IMR-90 (cell line): ENCODE measurements at regions of chr3 and their contacts with region 1.

Region 1: GRCh38 chr3:171829841-171830517 is 13.2 kb upstream of the TMEM212 start:
- DNase-seq: peak; percentile 85
- ATAC-seq: peak; percentile 64
- H3K4me3 ChIP-seq: no peak overlapping the region
- H3K27ac ChIP-seq: no peak overlapping the region
- H3K4me1 ChIP-seq: peaks cover 16% of the 10 kb centered on the region
- H3K27me3 ChIP-seq: no peaks in the 10 kb centered on the region
- CTCF ChIP-seq: peak; percentile 75
- POLR2A ChIP-seq: 0 out of 2 replicates have a peak, but pooled peaks have one; percentile 25
- RAD21 ChIP-seq: peak; percentile 76

Region 2: DNA sequence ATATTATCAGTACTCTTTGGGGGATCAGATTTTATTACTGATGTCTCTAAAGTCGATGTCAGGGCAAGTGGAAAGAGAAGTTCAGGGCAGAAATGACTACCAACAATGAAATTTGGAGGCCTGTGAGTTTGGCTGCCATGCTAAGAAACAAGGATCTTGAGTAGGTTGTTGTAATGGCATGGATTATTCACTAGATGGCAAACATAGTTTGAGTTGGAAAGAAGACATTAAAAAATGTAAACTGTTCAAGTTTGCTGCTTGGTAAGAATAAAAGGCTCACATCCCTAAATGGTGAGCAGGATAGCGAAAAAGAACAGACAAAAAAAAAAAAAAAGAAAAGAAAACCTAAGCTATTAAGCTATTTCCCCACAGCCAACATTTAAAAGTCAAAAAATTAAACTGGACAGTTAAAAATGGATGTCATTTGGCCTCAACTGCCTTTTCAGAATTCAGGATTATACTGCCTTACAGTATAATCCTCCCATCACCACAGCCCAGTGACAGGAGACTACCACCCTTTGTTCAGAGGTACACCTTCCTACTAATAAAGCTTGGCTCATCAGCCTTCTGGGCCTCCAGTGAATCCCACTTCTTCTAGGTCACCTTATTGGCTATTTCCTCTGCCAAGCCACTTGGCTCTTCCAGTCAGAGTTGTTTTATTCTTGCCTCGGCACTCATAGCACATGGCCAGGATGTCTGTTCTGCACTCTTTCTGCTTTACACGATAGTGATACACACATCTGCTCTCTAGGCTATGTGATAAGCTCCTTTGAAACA is 183.4 kb before region 1 on chr3:
- CTCF ChIA-PET with region 1: interaction called, 4 read pairs
- POLR2A ChIA-PET with region 1: no interaction called
- dilution Hi-C with region 1: no loop called
- in situ Hi-C with region 1: no loop called
- intact Hi-C with region 1: loop called (anchors 1 kb)
- DNase-seq: peak; percentile 80
- ATAC-seq: peak; percentile 90
- H3K4me3 ChIP-seq: no peak overlapping the region
- H3K27ac ChIP-seq: no peak overlapping the region
- H3K4me1 ChIP-seq: peaks cover 2% of the 10 kb centered on the region; the same call in 1 of the 2 replicates
- H3K27me3 ChIP-seq: no peaks in the 10 kb centered on the region
- CTCF ChIP-seq: peak; percentile 76
- POLR2A ChIP-seq: no peak
- RAD21 ChIP-seq: peak; percentile 83

Region 3: GRCh38 chr3:171660188-171660587 is 169.8 kb before region 1 on chr3:
- CTCF ChIA-PET with region 1: no interaction called
- POLR2A ChIA-PET with region 1: no interaction called
- dilution Hi-C with region 1: no loop called
- in situ Hi-C with region 1: no loop called
- intact Hi-C with region 1: no loop called
- DNase-seq: no peak
- ATAC-seq: no peak
- H3K4me3 ChIP-seq: no peak overlapping the region
- H3K27ac ChIP-seq: no peak overlapping the region
- H3K4me1 ChIP-seq: no peaks in the 10 kb centered on the region
- H3K27me3 ChIP-seq: no peaks in the 10 kb centered on the region
- CTCF ChIP-seq: no peak
- POLR2A ChIP-seq: no peak
- RAD21 ChIP-seq: no peak

Region 4: DNA sequence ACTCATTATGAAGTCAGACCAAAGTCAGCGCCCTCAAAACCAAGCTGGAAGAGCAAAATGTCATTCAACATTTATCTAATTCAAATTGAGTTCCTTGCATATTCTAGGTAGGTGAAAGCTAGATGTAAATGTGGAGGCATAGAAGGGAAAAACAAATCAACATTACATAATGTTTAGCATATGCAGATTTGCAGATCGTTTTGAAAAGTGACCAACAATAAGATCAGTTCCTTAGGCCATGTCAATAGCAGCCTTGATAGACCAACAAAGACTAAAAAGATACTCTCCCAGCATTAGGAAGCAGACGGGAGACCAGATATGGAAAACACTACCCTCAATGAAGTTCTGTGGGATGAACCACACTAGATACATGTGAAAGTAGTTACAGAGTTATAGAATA is 102.7 kb before region 1 on chr3:
- CTCF ChIA-PET with region 1: no interaction called
- POLR2A ChIA-PET with region 1: no interaction called
- dilution Hi-C with region 1: no loop called
- in situ Hi-C with region 1: no loop called
- intact Hi-C with region 1: no loop called
- DNase-seq: no peak
- ATAC-seq: no peak
- H3K4me3 ChIP-seq: no peak overlapping the region
- H3K27ac ChIP-seq: no peak overlapping the region
- H3K4me1 ChIP-seq: no peaks in the 10 kb centered on the region
- H3K27me3 ChIP-seq: no peaks in the 10 kb centered on the region
- CTCF ChIP-seq: no peak
- POLR2A ChIP-seq: no peak
- RAD21 ChIP-seq: no peak

Region 5: DNA sequence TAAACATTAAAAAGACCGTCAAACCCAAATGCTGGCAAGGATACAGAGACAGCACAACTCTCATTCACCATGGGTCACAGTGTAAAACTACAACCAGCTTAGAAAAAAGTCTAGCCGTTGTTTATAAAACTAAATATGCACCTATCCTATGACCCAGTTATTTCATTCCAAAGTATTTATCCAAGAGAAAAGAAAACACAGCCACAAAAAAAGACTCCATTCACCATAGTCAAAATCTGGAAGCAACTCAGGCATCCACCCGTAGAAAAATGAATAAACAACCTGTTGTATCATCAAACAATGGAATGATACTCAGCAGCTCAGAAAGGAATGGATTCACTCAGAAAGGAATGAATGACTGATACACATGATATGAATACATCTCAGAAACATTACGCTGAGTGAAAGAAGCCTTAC is 48.3 kb before region 1 on chr3:
- CTCF ChIA-PET with region 1: interaction called, 3 read pairs
- POLR2A ChIA-PET with region 1: no interaction called
- dilution Hi-C with region 1: no loop called
- in situ Hi-C with region 1: no loop called
- intact Hi-C with region 1: loop called (anchors 5 kb)
- DNase-seq: peak; percentile 94
- ATAC-seq: peak; percentile 88
- H3K4me3 ChIP-seq: no peak overlapping the region
- H3K27ac ChIP-seq: no peak overlapping the region
- H3K4me1 ChIP-seq: peaks cover 9% of the 10 kb centered on the region
- H3K27me3 ChIP-seq: no peaks in the 10 kb centered on the region
- CTCF ChIP-seq: no peak
- POLR2A ChIP-seq: no peak
- RAD21 ChIP-seq: no peak